Adrenal gland (tissue), 19 donors: ENCODE measurements at regions of chr10 and their contacts with region 1.

Region 1: DNA sequence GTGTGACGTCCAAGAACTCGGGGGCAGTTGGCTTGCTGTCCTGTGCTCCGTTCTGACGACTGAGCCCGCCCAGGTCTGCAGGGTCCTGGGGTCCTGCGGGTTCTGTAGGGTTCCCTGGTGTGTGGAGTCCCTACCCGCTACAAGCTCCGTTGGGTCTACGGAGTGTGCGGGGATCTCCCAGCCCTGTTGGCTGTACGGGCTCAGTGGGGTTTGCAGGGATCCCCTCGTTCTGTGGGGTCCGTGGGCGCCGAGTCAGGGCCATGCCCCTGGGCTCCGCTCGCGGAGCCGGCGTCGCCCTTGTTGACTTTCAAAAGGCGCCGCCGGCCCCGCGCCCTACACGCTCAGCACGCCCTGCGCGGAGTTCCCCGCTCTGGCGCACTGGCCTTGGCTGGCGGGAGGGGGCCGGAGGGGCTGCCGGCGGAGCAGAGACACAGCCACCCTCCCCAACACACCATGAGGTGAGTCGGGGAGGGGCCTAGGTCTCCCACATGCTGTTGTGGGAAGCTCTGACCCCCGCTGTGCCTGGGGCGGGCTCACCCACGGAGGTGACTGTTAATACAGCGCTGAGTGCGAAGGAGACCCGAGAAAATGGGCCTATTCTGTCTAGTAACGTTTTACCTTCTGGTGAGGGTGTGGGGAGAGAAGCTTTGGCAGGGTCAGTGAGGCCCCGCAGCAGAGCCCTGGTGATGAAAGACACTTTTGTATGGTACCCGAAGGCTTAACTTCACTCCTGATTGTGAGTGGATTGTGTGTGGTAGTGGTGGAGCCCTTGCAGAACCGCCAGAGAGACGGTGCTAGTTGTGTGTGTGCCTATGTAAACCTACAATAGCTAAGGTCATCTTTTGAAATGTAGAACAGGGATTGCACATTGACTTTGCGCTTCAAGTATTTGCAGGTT is 8.1 kb downstream of the TASOR2 start:
- DNase-seq: peak; percentile 52 to 69 (median 57)
- H3K4me3 ChIP-seq: peak overlapping the region in 2 of 4 donors; percentile 24 to 67
- H3K27ac ChIP-seq: peak overlapping the region in 4 of 5 donors; percentile 11 to 60 (median 39)
- H3K4me1 ChIP-seq: peaks cover 3 to 29% of the 10 kb centered on the region in 2 donors
- H3K27me3 ChIP-seq: no peaks in the 10 kb centered on the region
- CTCF ChIP-seq: no peak
- POLR2A ChIP-seq: no peak

Region 2: GRCh38 chr10:5776136-5776880 is 83.6 kb after region 1 on chr10:
- intact Hi-C with region 1: loop called in 1 of 2 experiments (anchors 10 kb)
- DNase-seq: no peak
- H3K4me3 ChIP-seq: no peak overlapping the region
- H3K27ac ChIP-seq: peak overlapping the region in 4 of 5 donors; percentile 22 to 69 (median 66)
- H3K4me1 ChIP-seq: peaks cover 17 to 43% of the 10 kb centered on the region in 2 donors
- H3K27me3 ChIP-seq: no peaks in the 10 kb centered on the region
- CTCF ChIP-seq: no peak
- POLR2A ChIP-seq: no peak